Activated CD4-positive, alpha-beta memory T cell treated with anti-CD3 and anti-CD28 coated beads, Interleukin-2, amount 10 ng/mL, durations not matched to agents 7 days and 5 days (primary cell): ENCODE measurements at regions of chr11 and their contacts with region 1.

Region 1: GRCh38 chr11:59171508-59172322 is at the start of gene DTX4:
- DNase-seq: peak; percentile 91
- H3K4me3 Mint-ChIP-seq: peak within 1 kb of the TSS; percentile 73
- H3K27ac Mint-ChIP-seq: no peak within 1 kb of the TSS
- H3K4me1 Mint-ChIP-seq: peaks cover 7% of the 10 kb centered on the region
- H3K27me3 Mint-ChIP-seq: peaks cover 22% of the 10 kb centered on the region
- total RNA-seq, gene DTX4: 0.30 to 0.48 TPM

Region 2: GRCh38 chr11:58905721-58906477 is 265.8 kb before region 1 on chr11:
- CTCF ChIA-PET with region 1: no interaction called
- POLR2A ChIA-PET with region 1: no interaction called
- DNase-seq: no peak
- H3K4me3 Mint-ChIP-seq: no peak overlapping the region
- H3K27ac Mint-ChIP-seq: no peak overlapping the region
- H3K4me1 Mint-ChIP-seq: no peaks in the 10 kb centered on the region
- H3K27me3 Mint-ChIP-seq: peaks cover 49% of the 10 kb centered on the region

Region 3: GRCh38 chr11:58999291-58999680 is 172.4 kb before region 1 on chr11:
- CTCF ChIA-PET with region 1: no interaction called
- POLR2A ChIA-PET with region 1: no interaction called
- DNase-seq: no peak
- H3K4me3 Mint-ChIP-seq: no peak overlapping the region
- H3K27ac Mint-ChIP-seq: no peak overlapping the region
- H3K4me1 Mint-ChIP-seq: no peaks in the 10 kb centered on the region
- H3K27me3 Mint-ChIP-seq: peaks cover 2% of the 10 kb centered on the region

Region 4: GRCh38 chr11:59142530-59143507 is 28.9 kb before region 1 on chr11 and contains the start of gene FAM111A:
- CTCF ChIA-PET with region 1: interaction called, 26 read pairs
- POLR2A ChIA-PET with region 1: interaction called, 14 read pairs
- DNase-seq: peak; percentile 91
- H3K4me3 Mint-ChIP-seq: peak within 1 kb of the TSS; percentile 95
- H3K27ac Mint-ChIP-seq: peak within 1 kb of the TSS; percentile 93
- H3K4me1 Mint-ChIP-seq: peaks cover 58% of the 10 kb centered on the region
- H3K27me3 Mint-ChIP-seq: no peaks in the 10 kb centered on the region
- total RNA-seq, gene FAM111A: 136 to 141 TPM

Region 5: GRCh38 chr11:59158206-59159068 is 13.3 kb before region 1 on chr11:
- CTCF ChIA-PET with region 1: interaction called, 66 read pairs
- POLR2A ChIA-PET with region 1: interaction called, 4 read pairs
- DNase-seq: peak; percentile 69
- H3K4me3 Mint-ChIP-seq: no peak overlapping the region
- H3K27ac Mint-ChIP-seq: no peak overlapping the region
- H3K4me1 Mint-ChIP-seq: peaks cover 10% of the 10 kb centered on the region
- H3K27me3 Mint-ChIP-seq: peaks cover 7% of the 10 kb centered on the region

Region 6: GRCh38 chr11:59199546-59200422 is 28.1 kb after region 1 on chr11:
- CTCF ChIA-PET with region 1: interaction called, 30 read pairs
- POLR2A ChIA-PET with region 1: no interaction called
- DNase-seq: no peak
- H3K4me3 Mint-ChIP-seq: no peak overlapping the region
- H3K27ac Mint-ChIP-seq: no peak overlapping the region
- H3K4me1 Mint-ChIP-seq: peaks cover 4% of the 10 kb centered on the region
- H3K27me3 Mint-ChIP-seq: no peaks in the 10 kb centered on the region

Region 7: DNA sequence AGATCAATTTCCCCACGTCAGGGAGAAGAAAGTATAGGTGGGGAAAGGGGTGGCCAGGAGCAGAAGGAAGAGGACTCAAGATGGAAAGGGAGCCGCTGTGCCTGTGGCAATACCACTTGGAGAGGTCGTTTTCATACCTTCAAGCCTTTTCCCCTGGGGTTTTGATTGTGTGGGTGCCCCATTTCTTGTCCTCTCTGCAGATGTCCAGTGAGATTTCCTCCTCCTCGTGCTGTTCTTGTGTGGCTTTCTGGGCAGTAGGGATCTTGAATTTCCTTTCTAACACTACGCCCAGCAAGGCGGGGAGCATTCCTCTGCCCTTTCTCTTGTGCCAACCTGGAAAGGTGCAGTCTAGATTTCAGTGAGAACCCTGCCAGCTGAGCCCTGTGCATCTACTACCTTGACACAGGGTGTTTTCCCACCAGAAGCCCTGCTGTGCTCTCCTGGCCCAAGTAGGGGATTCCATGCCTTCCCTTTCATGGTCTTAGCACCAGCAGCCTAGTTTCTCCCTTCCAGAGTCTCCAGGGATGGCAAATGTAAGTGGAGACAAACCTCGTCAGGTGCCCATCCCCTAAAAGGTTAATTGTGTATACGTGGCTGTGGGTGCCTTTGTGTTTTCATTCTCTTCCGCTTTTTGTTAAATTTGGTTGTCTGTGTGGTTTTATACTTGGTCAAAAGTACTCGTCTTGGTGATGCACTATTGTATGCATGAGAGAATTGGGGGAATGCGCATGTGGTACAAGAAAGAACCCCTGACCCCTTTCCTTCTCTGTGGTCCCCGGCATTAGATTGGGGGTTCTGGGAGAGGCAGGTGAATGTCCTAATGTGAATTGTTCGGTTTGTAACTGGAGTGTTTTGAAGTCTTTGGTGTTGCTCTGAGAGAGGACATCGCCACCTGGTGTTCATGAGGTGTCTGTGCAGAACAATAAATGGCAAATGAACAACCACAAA is 112.4 kb after region 1 on chr11:
- CTCF ChIA-PET with region 1: interaction called, 13 read pairs
- POLR2A ChIA-PET with region 1: no interaction called
- DNase-seq: peak; percentile 56
- H3K4me3 Mint-ChIP-seq: peak overlapping the region; percentile 36
- H3K27ac Mint-ChIP-seq: no peak overlapping the region
- H3K4me1 Mint-ChIP-seq: peaks cover 16% of the 10 kb centered on the region
- H3K27me3 Mint-ChIP-seq: peaks cover 17% of the 10 kb centered on the region